Cardiac septum (tissue), 1 donor: ENCODE measurements at regions of chr1 and their contacts with region 1.

Region 1: DNA sequence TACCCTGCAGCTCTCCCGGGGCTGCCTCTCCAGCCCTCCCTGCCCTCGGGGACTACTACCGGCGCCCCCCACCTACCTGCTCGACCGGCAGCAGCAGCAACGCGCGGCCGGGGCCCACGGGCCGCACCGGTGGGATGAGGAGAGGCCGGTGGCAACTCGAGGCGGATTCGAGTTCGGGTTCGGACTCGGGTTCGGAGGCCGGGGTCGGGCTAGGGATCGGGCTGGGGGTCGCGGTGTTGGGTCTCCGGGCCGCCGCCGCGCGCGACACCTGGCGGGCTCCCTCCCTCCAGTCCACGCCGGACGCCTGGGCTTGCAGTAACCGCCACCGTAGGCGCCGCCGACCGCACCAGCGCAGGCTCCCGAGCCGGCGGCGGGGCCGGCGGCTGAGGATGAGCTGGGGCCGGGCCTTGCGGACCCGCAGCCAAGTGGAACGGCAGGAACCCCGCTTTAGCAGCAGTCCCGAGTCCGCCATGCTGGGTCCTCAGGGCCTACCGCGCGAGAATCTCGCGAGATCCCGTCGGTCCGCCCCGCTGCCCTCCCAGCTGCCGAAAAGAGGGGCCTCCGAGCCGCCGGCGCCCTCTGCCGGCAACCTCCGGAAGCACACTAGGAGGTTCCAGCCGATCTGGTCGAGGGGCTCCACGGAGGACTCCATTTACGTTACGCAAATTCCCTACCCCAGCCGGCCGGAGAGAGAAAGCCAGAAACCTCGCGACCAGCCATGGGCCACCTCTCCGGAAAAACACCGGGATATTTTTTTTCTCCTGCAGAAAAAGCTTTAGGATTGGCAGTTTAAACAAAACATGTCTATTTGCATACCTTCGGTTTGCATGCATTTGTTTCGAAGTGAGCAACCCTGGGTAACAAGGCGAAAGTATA is at the start of gene NOL9:
- DNase-seq: peak; percentile 97
- total RNA-seq, gene NOL9: 16.5 TPM

Region 2: DNA sequence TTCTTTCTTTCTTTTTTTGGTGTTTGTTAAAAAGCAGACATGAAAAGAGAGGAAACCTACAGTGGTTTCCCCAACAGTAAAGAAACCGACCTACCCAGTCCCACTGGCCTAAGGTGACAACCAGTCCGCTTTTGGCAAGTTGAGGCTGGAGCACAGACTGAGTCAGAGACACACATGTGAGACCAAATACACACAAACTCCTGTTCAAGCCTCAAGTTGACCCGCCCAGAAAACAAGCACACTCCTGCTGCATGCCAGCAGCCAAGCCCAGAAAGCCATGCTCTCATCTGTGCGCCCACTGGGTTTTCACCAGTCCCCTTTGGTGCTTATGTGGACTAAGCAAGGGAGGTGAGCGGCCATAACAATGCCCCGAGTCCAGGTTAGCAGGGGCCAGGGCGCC is 228.8 kb before region 1 on chr1:
- intact Hi-C with region 1: no loop called
- DNase-seq: no peak

Region 3: GRCh38 chr1:6489799-6490180 is 64.5 kb before region 1 on chr1:
- intact Hi-C with region 1: loop called (anchors 1 kb)
- DNase-seq: peak; percentile 88

Region 4: GRCh38 chr1:6579374-6580118 is 25.3 kb after region 1 on chr1 and contains the start of gene ZBTB48:
- intact Hi-C with region 1: loop called (anchors 2 kb)
- DNase-seq: peak; percentile 100
- total RNA-seq, gene ZBTB48: 10.7 TPM

Region 5: DNA sequence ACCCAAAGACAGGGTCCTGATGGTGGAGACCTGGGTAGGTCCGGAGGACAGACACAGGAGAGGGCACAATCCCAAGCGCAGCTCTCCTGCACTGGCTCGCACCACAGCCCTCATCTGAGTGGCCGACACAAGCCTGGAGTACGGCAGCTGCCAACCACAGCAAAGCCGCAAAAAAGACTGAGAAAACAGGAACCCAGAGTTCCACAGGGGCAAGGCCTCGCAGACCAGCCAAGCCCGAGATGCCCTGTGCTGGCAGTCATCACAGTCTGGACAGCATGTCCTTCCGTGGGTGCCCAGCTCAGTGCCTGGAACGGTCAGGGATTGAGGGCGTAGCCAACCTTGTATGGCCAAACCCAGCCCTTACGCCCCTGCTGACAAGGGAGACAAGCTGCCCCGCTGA is 37.0 kb after region 1 on chr1:
- intact Hi-C with region 1: no loop called
- DNase-seq: no peak

Region 6: GRCh38 chr1:6624710-6625583 is 70.7 kb after region 1 on chr1 and contains the start of gene THAP3:
- intact Hi-C with region 1: loop called (anchors 2 kb)
- DNase-seq: peak; percentile 95
- total RNA-seq, gene THAP3: 8.8 TPM

Region 7: GRCh38 chr1:6701437-6702153 is 147.3 kb after region 1 on chr1 and contains the start of gene DNAJC11:
- intact Hi-C with region 1: loop called (anchors 1 kb)
- DNase-seq: peak; percentile 96
- total RNA-seq, gene DNAJC11: 49.4 TPM